WTC11 (cell line): ENCODE measurements at regions of chr5 and their contacts with region 1.

Region 1: GRCh38 chr5:61010467-61011454 is 65.8 kb downstream of the NDUFAF2 start:
- DNase-seq: peak; percentile 44
- ATAC-seq: peak; percentile 98
- H3K4me3 Mint-ChIP-seq: no peak overlapping the region
- H3K27ac Mint-ChIP-seq: no peak overlapping the region
- H3K4me1 Mint-ChIP-seq: no peaks in the 10 kb centered on the region
- H3K27me3 Mint-ChIP-seq: no peaks in the 10 kb centered on the region
- CTCF ChIP-seq: peak; percentile 14; the same call in 1 of the 2 replicates

Region 2: GRCh38 chr5:61023131-61023530 is 12.4 kb after region 1 on chr5:
- CTCF ChIA-PET with region 1: interaction called, 10 read pairs
- POLR2A ChIA-PET with region 1: no interaction called
- DNase-seq: no peak
- ATAC-seq: no peak
- H3K4me3 Mint-ChIP-seq: no peak overlapping the region
- H3K27ac Mint-ChIP-seq: no peak overlapping the region
- H3K4me1 Mint-ChIP-seq: peaks cover 5% of the 10 kb centered on the region
- H3K27me3 Mint-ChIP-seq: no peaks in the 10 kb centered on the region
- CTCF ChIP-seq: no peak